ENCODE measurements at regions of chr6 and their contacts with region 1.

Region 1: GRCh38 chr6:31493875-31494694 is 3.9 kb upstream of the MICB start:
- DNase-seq: peak; percentile 96
- ATAC-seq: peak; percentile 87

Region 2: DNA sequence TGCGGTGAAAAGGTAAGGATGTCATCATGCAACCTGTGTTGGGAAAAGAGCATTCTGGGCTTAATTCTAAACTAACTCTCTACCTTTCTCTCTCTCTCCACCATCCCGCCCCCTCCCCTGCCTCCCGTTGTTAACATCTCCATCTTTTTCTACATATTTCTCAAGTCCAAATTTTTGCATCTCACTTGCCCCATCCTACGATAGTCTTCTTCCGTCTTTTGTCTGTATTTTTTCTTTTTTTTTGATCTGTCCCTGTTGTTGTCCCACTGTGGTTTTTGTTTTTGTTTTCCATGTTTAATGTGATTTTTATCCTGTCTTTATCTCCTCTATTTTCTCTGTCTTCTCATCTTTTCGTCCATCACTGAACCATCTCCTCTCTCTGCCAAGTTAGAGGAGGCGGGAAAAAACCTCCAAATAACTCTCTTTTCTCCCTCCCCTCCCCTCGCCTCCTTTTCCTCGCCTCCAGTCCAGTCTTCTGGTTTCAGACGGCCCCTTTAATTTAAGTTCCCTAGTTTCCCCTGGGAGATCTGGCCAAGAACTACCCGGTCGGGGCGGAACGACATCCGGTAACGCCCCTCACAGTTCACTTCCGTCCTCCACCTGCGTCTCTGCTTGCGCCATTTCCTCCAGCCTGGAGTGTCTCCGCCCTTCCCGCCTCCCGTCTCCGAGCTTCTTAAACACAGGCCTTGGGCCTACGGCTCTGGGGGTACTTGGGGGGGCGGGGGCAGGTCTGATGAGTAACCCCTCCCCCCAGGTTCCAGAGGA is 53.1 kb after region 1 on chr6 and contains the start of gene NFKBIL1:
- intact Hi-C with region 1: loop called (anchors 2 kb)
- DNase-seq: peak; percentile 95
- ATAC-seq: peak; percentile 97
- total RNA-seq, gene NFKBIL1: 10.8 TPM

Region 3: GRCh38 chr6:31597006-31597405 is 102.9 kb after region 1 on chr6:
- intact Hi-C with region 1: loop called (anchors 5 kb)
- DNase-seq: no peak
- ATAC-seq: peak; percentile 47

Measured in Right ventricle myocardium inferior (tissue), 1 donor.